ENCODE measurements at regions of chr3 and their contacts with region 1.

Region 1: DNA sequence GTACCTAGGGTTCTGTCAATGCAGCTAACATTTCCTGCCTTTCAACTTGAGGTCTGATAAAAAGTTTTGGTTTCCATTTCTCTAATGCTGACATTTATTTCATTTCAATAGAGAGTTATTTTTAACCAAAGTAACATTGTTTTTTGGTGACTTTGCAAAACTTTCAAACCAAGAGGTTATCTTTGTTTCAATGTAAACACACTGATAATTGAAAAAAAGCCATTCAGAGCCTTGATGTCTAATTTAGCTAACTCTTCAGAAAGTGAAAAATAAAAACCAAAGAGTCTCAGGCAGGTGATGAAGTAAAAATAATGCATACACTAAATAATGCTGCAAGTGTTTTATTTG is 9.6 kb upstream of the TIPARP start:
- DNase-seq: peak; percentile 52
- CTCF ChIP-seq: no peak

Region 2: DNA sequence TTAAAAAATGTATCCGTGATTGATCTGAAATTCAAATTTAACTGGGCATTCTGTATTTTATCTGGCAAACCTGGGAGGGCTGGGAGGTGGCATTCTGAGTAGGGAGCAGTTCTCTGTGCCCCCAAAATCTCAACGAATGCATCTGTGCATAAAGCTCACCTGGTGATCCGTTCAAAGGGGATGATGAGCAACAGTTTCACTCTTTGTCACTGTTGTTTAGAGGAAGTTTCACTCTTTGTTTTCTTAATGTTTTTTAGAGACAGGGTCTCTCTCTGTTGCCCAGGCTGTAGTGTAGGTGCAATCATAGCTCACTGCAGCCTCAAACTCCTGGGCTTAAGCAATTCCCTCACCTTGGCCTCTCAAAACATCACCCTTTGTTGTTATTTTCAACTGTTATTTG is 296.6 kb before region 1 on chr3:
- in situ Hi-C with region 1: no loop called
- DNase-seq: peak; percentile 30
- CTCF ChIP-seq: no peak

Region 3: DNA sequence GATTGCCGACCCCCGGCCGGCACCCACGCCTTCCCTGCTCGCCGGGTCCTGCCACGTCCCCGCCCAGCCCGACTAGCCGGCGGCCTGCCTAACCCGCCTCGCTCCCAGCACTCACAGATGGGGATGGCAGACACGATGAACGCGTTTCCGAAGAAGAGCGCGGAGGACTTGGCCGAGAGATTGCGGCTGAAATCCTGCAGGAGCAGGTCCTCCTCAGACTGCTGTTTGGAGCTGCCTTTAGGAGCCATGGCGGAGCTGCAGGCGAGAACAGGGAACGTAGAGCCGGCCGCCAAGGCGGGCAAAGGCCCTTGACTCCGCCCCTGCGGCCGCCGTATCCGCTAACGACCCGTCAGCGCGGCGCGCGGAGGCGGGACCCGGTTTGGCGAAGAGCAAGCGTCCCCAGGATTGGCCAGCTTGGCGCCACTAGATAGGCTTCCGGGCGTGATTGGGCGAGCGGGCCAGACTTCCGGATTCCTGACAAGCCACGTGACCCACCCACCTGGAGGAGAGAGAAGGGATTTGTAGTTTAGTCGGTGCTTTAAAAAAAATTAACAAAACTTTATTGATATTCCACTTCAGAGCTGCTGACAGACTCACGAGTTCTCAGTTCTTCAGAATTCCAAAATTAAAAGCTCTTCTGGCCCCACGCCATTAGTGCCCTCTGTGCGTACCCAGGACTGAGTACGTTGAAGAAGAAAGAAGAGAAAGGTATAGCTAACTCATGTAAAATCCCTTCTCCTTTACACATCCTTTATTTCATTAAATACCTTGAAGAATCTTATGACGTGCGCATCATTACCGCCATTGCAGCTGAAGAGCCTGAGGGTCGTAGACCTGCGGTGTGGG is 109.7 kb before region 1 on chr3 and contains the start of gene SSR3:
- in situ Hi-C with region 1: loop called (anchors 10 kb)
- DNase-seq: peak; percentile 91
- CTCF ChIP-seq: no peak

Region 4: DNA sequence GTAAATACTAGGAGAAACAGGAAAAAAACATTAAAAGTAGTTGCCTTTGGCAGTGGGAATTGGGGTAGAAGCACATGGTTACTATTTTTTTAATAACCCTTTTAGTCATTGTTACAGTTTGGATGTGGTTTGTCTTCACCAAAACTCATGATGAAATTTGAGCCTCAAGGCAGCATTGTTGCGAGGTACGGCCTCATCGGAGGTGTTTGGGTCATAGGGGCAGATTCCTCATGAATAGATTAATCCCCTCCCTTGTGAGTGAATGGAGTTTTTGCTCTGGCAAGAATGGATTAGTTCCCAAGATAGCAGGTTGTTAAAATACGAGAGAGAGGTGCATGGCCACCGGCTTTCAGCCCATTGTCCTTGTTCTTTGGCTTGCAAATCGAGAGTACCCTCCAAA is 253.9 kb after region 1 on chr3:
- in situ Hi-C with region 1: no loop called
- DNase-seq: no peak
- CTCF ChIP-seq: no peak

Region 5: DNA sequence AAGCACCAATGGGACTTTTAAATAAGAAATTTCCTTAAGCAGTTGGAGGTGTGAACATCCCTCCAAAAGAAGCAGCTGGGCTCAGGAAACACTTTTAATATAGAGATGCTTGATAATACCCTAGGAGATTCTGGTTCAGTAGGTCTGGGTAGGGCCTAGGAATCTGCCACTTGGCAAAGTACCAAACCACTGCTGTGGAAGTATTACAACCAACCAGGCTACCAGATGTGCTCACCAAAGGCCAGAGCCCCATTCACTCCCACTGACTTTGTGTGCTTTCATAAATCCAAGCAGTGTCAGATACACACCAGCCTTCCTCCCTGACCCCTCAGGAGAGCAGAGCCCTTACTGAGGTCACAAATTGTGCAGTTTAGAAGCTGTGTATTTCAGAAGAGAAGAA is 332.5 kb after region 1 on chr3:
- in situ Hi-C with region 1: no loop called
- DNase-seq: no peak
- CTCF ChIP-seq: no peak

Measured in GM13977 (cell line).